CD14-positive monocyte (primary cell): ENCODE measurements at regions of chr9 and their contacts with region 1.

Region 1: GRCh38 chr9:122827761-122828093 is 661 bp downstream of the PDCL start:
- DNase-seq: no peak
- H3K4me3 ChIP-seq: peak overlapping the region; percentile 87 to 95 (median 91)
- H3K4me3 Mint-ChIP-seq: peak overlapping the region; percentile 94 to 98
- H3K27ac ChIP-seq: peak overlapping the region; percentile 87
- H3K27ac Mint-ChIP-seq: peak overlapping the region; percentile 88 to 97 (median 93)
- H3K4me1 ChIP-seq: peaks cover 13 to 15% of the 10 kb centered on the region in 2 donors
- H3K4me1 Mint-ChIP-seq: peaks cover 19% of the 10 kb centered on the region
- H3K27me3 ChIP-seq: no peaks in the 10 kb centered on the region
- H3K27me3 Mint-ChIP-seq: peaks cover 0 to 4% (median 4%) of the 10 kb centered on the region in 3 donors
- CTCF ChIP-seq: no peak

Region 2: DNA sequence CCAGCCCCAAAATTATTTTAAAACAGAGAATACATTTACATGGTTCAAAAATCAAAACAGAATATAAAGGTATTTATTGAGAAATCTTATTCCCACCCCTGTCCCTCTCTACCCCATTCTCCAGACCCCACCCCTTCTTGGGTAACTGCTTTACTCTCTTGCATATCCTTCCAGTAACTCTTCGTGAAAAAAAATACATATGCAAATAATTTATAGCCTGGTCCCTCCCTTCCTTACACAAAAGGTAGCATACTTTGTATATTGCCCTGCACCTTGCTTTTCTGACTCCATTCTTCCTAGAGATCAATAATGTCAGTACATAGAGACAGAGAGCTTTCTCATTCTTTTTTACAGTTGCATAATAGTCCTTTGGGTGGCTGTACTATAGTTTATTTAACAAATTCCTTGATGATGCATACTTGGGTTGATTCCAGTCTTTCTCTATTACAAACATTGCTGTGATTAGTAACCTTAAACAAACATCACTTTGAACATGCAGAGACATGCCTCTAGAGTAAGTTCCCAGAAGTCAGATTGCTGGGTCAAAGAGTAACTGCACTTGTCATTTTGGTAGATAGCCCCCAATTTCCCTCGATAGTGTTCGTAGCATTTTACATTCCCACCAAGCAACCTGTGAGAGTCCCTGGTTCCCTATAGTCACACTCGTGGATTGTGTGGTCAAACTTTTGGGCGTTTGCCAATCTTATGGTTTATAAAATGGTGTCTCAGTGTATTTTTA is 1505.5 kb before region 1 on chr9:
- intact Hi-C with region 1: no loop called
- DNase-seq: no peak
- H3K4me3 ChIP-seq: no peak overlapping the region
- H3K4me3 Mint-ChIP-seq: no peak overlapping the region
- H3K27ac ChIP-seq: no peak overlapping the region
- H3K27ac Mint-ChIP-seq: peak overlapping the region in 2 of 7 donors; percentile 5 to 26
- H3K4me1 ChIP-seq: peaks cover 18 to 31% of the 10 kb centered on the region in 2 donors
- H3K4me1 Mint-ChIP-seq: peaks cover 31% of the 10 kb centered on the region
- H3K27me3 ChIP-seq: no peaks in the 10 kb centered on the region
- H3K27me3 Mint-ChIP-seq: peaks cover 0 to 1% (median 0%) of the 10 kb centered on the region in 3 donors
- CTCF ChIP-seq: no peak

Region 3: GRCh38 chr9:122264360-122265148 is 563.2 kb before region 1 on chr9 and contains the starts of genes MRRF and RBM18:
- intact Hi-C with region 1: loop called in 1 of 2 experiments (anchors 10 kb)
- DNase-seq: peak; percentile 94 to 96 (median 96)
- H3K4me3 ChIP-seq: peak within 1 kb of the TSS; percentile 88 to 94 (median 89)
- H3K4me3 Mint-ChIP-seq: peak within 1 kb of the TSS; percentile 98 to 99
- H3K27ac ChIP-seq: peak within 1 kb of the TSS; percentile 84 to 100
- H3K27ac Mint-ChIP-seq: peak within 1 kb of the TSS; percentile 100
- H3K4me1 ChIP-seq: peaks cover 14 to 27% of the 10 kb centered on the region in 2 donors
- H3K4me1 Mint-ChIP-seq: peaks cover 27% of the 10 kb centered on the region
- H3K27me3 ChIP-seq: no peaks in the 10 kb centered on the region
- H3K27me3 Mint-ChIP-seq: no peaks in the 10 kb centered on the region
- CTCF ChIP-seq: no peak
- polyA plus RNA-seq, gene MRRF: 16.0 to 34.4 (median 16.2) TPM
- polyA plus RNA-seq, gene RBM18: 10.4 to 26.3 (median 25.3) TPM